T-cell (primary cell): ENCODE measurements at regions of chr5 and their contacts with region 1.

Region 1: DNA sequence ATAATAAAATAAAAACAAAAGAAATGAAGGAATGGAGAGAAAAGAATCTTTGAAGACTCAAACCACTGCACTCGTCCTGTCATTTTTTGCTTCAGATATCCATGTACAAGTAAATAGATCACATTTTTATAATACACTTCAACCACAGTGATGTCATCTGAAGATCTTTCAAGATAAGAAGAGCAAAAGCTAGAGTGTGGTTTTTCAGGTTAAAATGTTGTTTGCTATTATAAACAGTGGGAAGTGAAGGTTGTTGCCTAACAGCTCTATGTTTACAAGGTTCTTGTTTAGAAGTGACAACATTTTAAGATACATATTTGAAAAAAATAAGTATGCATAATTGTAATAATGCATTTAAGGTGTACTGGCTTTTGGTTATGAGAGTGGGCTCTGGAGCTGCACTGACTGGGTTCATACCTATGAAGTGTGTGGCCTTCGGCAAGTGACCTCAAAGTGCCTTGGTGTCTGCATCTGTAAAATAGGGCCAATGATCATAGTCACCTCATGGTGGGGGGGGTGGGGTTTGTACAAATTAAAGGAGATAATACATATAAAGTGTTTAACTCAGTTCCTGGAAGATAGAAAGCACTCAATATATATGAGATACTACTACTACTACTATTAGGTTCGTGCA is 45.5 kb upstream of the IL7R start:
- DNase-seq: peak in 19 of 35 experiments; percentile 11 to 89 (median 32)
- ATAC-seq: peak; percentile 79 to 83 (median 82)
- H3K4me3 ChIP-seq: no peak overlapping the region
- H3K4me3 Mint-ChIP-seq: peak overlapping the region; percentile 52 to 62 (median 58)
- H3K27ac ChIP-seq: peak overlapping the region; percentile 97
- H3K27ac Mint-ChIP-seq: peak overlapping the region; percentile 94 to 96
- H3K4me1 ChIP-seq: peaks cover 49 to 58% of the 10 kb centered on the region in 2 experiments
- H3K4me1 Mint-ChIP-seq: peaks cover 65 to 73% (median 67%) of the 10 kb centered on the region in 3 donors
- H3K27me3 ChIP-seq: no peaks in the 10 kb centered on the region
- H3K27me3 Mint-ChIP-seq: no peaks in the 10 kb centered on the region

Region 2: DNA sequence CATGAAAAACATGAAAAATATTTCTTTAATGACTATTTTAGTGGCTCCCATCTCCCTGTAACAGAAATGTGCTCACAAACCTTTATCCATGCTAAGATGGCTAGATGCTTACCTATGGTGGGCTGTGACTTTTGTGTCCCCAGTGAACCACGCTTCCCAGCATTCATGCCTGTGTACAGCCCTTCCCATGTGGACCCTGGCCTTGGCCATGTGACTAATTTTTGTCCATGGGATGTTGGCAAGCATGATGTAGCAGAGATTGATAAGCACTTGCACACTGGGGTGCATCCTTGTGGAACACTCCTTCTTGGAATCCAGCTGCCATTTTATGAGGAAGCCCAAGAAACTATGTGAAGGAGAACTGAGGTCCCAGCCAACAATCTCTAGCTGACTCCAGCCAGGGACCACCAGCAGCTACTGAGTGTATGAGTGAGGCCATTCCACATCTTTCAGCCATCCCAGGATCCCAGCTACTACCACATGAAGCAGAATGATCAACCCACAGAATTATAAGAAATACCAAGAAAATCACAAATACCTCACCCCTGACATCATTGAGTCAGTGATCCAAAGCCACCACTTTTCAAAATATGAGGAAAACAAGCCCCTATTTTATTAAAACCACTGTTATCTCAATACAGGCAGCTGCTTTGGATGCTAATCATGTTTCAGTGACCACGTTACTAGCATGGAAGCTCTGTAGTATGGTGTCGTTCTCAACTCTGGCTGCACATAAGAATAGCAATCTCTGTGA is 1171.2 kb before region 1 on chr5:
- CTCF ChIA-PET with region 1: no interaction called
- POLR2A ChIA-PET with region 1: no interaction called
- DNase-seq: no peak
- ATAC-seq: no peak
- H3K4me3 ChIP-seq: no peak overlapping the region
- H3K4me3 Mint-ChIP-seq: no peak overlapping the region
- H3K27ac ChIP-seq: no peak overlapping the region
- H3K27ac Mint-ChIP-seq: no peak overlapping the region
- H3K4me1 ChIP-seq: no peaks in the 10 kb centered on the region
- H3K4me1 Mint-ChIP-seq: no peaks in the 10 kb centered on the region
- H3K27me3 ChIP-seq: no peaks in the 10 kb centered on the region
- H3K27me3 Mint-ChIP-seq: peaks cover 4 to 23% of the 10 kb centered on the region in 2 donors

Region 3: DNA sequence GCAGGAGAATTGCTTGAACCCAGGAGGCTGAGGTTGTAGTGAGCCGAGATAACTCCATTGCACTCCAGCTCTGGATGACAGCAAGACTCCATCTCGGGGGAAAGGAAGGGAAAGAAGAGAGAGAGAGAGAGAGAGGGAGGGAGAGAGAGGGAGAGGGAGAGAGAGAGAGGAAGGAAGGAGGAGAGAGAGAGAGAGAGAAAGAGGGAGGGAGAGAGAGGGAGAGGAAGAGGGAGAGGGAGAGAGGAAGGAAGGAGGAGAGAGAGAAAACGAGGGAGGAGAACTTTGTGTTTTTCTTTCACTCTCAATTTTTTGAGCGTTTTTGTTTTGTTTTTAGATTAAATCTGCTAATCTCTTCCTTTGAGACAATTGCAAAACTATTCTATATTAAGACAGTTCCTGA is 146.6 kb before region 1 on chr5:
- CTCF ChIA-PET with region 1: no interaction called
- POLR2A ChIA-PET with region 1: interaction called in 1 of 2 experiments, 13 read pairs
- DNase-seq: no peak
- ATAC-seq: no peak
- H3K4me3 ChIP-seq: no peak overlapping the region
- H3K4me3 Mint-ChIP-seq: peak overlapping the region in 1 of 3 donors; percentile 21
- H3K27ac ChIP-seq: no peak overlapping the region
- H3K27ac Mint-ChIP-seq: no peak overlapping the region
- H3K4me1 ChIP-seq: peaks cover 3 to 23% of the 10 kb centered on the region in 2 experiments
- H3K4me1 Mint-ChIP-seq: peaks cover 38 to 47% (median 45%) of the 10 kb centered on the region in 3 donors
- H3K27me3 ChIP-seq: no peaks in the 10 kb centered on the region
- H3K27me3 Mint-ChIP-seq: no peaks in the 10 kb centered on the region

Region 4: GRCh38 chr5:35822511-35822910 is 11.3 kb after region 1 on chr5:
- CTCF ChIA-PET with region 1: interaction called, 3 to 8 read pairs
- POLR2A ChIA-PET with region 1: interaction called, 7 to 15 read pairs
- DNase-seq: peak; percentile 34 to 87 (median 63)
- ATAC-seq: peak; percentile 81 to 86 (median 85)
- H3K4me3 ChIP-seq: peak overlapping the region; percentile 4 to 40
- H3K4me3 Mint-ChIP-seq: peak overlapping the region; percentile 55 to 69 (median 65)
- H3K27ac ChIP-seq: peak overlapping the region; percentile 79
- H3K27ac Mint-ChIP-seq: peak overlapping the region; percentile 97 to 99
- H3K4me1 ChIP-seq: peaks cover 78 to 87% of the 10 kb centered on the region in 2 experiments
- H3K4me1 Mint-ChIP-seq: peaks cover 88 to 91% (median 89%) of the 10 kb centered on the region in 3 donors
- H3K27me3 ChIP-seq: no peaks in the 10 kb centered on the region
- H3K27me3 Mint-ChIP-seq: no peaks in the 10 kb centered on the region

Region 5: GRCh38 chr5:35830587-35830986 is 19.4 kb after region 1 on chr5:
- CTCF ChIA-PET with region 1: interaction called, 4 to 8 read pairs
- POLR2A ChIA-PET with region 1: interaction called in 1 of 2 experiments, 16 read pairs
- DNase-seq: peak in 31 of 35 experiments; percentile 24 to 80 (median 53)
- ATAC-seq: peak; percentile 87 to 95 (median 90)
- H3K4me3 ChIP-seq: no peak overlapping the region
- H3K4me3 Mint-ChIP-seq: peak overlapping the region; percentile 32 to 57 (median 40)
- H3K27ac ChIP-seq: peak overlapping the region; percentile 66
- H3K27ac Mint-ChIP-seq: peak overlapping the region; percentile 91 to 99
- H3K4me1 ChIP-seq: peaks cover 42 to 69% of the 10 kb centered on the region in 2 experiments
- H3K4me1 Mint-ChIP-seq: peaks cover 92 to 94% (median 92%) of the 10 kb centered on the region in 3 donors
- H3K27me3 ChIP-seq: no peaks in the 10 kb centered on the region
- H3K27me3 Mint-ChIP-seq: no peaks in the 10 kb centered on the region

Region 6: DNA sequence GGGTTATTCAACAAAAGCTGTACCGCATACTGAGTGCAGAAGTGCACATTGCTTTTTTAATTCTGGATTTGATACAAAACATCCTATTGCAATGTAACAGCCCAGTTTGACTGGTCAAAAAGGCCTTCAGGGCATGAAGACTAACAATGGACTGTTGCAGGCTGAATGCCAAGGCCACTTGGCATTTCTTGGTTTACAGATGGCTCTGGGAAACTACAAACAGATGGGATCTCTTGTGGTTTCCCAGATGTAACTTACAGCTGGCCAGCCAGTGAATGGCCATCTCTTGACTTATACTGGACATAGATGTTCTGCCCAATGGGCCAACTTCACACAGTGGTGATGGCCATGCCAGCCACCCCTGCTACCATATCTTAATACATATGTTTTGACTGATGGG is 218.7 kb after region 1 on chr5:
- CTCF ChIA-PET with region 1: no interaction called
- POLR2A ChIA-PET with region 1: no interaction called
- DNase-seq: no peak
- ATAC-seq: no peak
- H3K4me3 ChIP-seq: no peak overlapping the region
- H3K4me3 Mint-ChIP-seq: no peak overlapping the region
- H3K27ac ChIP-seq: no peak overlapping the region
- H3K27ac Mint-ChIP-seq: no peak overlapping the region
- H3K4me1 ChIP-seq: no peaks in the 10 kb centered on the region
- H3K4me1 Mint-ChIP-seq: no peaks in the 10 kb centered on the region
- H3K27me3 ChIP-seq: peaks cover 0 to 8% of the 10 kb centered on the region in 2 experiments
- H3K27me3 Mint-ChIP-seq: peaks cover 4 to 11% of the 10 kb centered on the region in 2 donors

Region 7: DNA sequence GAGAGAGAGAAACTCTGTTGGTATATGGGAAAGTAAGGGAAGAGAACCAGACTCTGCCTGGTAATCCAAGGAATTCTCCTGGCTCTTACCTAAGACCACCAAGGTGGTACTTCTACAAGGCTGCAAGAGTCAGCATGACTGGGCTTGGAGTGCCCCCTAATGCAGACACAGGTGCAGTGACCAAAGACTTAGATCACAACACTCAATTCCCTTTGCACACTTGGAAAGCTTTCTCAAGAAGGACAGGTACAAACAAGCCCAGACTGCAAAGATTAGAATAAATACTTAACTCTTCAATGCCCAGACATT is 230.3 kb after region 1 on chr5:
- CTCF ChIA-PET with region 1: no interaction called
- POLR2A ChIA-PET with region 1: no interaction called
- DNase-seq: no peak
- ATAC-seq: no peak
- H3K4me3 ChIP-seq: no peak overlapping the region
- H3K4me3 Mint-ChIP-seq: no peak overlapping the region
- H3K27ac ChIP-seq: no peak overlapping the region
- H3K27ac Mint-ChIP-seq: no peak overlapping the region
- H3K4me1 ChIP-seq: no peaks in the 10 kb centered on the region
- H3K4me1 Mint-ChIP-seq: no peaks in the 10 kb centered on the region
- H3K27me3 ChIP-seq: peaks cover 0 to 7% of the 10 kb centered on the region in 2 experiments
- H3K27me3 Mint-ChIP-seq: peaks cover 6 to 15% of the 10 kb centered on the region in 2 donors